Breast epithelium (tissue), 4 donors: ENCODE measurements at regions of chr1 and their contacts with region 1.

Region 1: GRCh38 chr1:78702427-78702826 is 52.8 kb downstream of the IFI44 start:
- DNase-seq: no peak
- H3K4me3 ChIP-seq: no peak overlapping the region
- H3K27ac ChIP-seq: no peak overlapping the region
- H3K4me1 ChIP-seq: no peaks in the 10 kb centered on the region
- H3K27me3 ChIP-seq: no peaks in the 10 kb centered on the region
- CTCF ChIP-seq: no peak
- POLR2A ChIP-seq: no peak

Region 2: DNA sequence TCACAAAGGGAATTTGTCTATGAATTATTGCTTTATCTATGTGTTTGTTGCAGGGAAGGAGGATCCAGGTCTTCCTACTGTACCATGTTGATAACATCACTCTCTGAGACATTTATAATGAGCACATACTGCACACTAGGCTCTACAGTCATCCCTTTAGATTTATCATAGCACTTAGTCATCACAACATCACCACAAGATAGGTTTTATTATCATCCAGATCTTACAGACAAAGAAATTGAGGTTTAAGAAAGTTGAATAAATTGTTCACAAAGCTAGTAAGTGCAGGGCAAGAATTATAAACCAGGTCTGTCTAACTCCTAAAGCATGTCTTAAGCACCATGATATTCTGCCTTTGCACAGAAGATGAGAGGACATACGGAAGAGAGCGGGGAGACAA is 1956.2 kb before region 1 on chr1:
- intact Hi-C with region 1: no loop called
- DNase-seq: no peak
- H3K4me3 ChIP-seq: no peak overlapping the region
- H3K27ac ChIP-seq: no peak overlapping the region
- H3K4me1 ChIP-seq: no peaks in the 10 kb centered on the region
- H3K27me3 ChIP-seq: no peaks in the 10 kb centered on the region
- CTCF ChIP-seq: no peak
- POLR2A ChIP-seq: no peak

Region 3: GRCh38 chr1:78237364-78237916 is 465.0 kb before region 1 on chr1:
- intact Hi-C with region 1: no loop called
- DNase-seq: peak in 1 of 2 donors; percentile 40
- H3K4me3 ChIP-seq: no peak overlapping the region
- H3K27ac ChIP-seq: peak overlapping the region in 1 of 2 donors; percentile 23
- H3K4me1 ChIP-seq: no peaks in the 10 kb centered on the region
- H3K27me3 ChIP-seq: no peaks in the 10 kb centered on the region
- CTCF ChIP-seq: no peak
- POLR2A ChIP-seq: no peak

Region 4: DNA sequence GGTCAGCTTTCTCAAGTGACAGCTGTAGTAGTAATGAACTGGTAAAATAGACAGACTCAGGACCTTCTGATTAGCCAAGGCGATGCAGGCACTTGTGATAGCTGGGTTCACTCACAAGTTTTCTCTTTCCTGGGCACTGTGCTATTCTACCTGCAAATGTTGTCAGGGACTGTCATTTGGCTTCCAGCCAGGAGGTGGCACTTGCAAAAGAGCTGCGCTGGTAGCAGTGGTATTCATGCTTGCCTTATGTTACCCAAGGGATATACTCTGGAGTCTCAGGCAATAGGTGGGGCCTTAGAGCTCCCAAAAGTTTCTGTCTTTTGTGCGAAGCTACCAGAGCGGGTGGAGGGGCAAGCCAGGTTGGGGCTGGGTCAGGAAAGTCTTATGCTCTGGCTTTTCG is 29.3 kb before region 1 on chr1:
- intact Hi-C with region 1: no loop called
- DNase-seq: no peak
- H3K4me3 ChIP-seq: no peak overlapping the region
- H3K27ac ChIP-seq: no peak overlapping the region
- H3K4me1 ChIP-seq: no peaks in the 10 kb centered on the region
- H3K27me3 ChIP-seq: no peaks in the 10 kb centered on the region
- CTCF ChIP-seq: no peak
- POLR2A ChIP-seq: no peak

Region 5: GRCh38 chr1:78722947-78723346 is 20.5 kb after region 1 on chr1:
- intact Hi-C with region 1: loop called (anchors 2 kb)
- DNase-seq: no peak
- H3K4me3 ChIP-seq: no peak overlapping the region
- H3K27ac ChIP-seq: no peak overlapping the region
- H3K4me1 ChIP-seq: no peaks in the 10 kb centered on the region
- H3K27me3 ChIP-seq: no peaks in the 10 kb centered on the region
- CTCF ChIP-seq: no peak
- POLR2A ChIP-seq: no peak

Region 6: DNA sequence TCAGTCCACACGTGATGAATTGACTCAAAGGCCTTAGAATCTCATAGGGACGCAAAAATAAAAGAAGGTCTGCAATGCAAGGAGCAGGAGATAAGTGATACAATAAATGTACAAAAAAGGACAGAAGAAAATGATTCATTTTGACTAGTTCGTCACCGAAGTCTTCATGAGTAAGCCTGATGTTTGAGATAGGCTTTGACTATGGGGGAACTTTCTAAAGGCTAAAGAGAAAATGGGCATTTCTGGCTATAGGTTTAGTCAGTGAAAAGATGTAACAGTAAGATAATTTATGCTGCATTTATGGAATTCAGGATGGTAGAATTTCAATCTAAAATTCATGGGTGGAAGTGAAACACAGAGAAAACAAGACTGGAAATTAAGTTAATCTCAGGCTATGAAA is 141.1 kb after region 1 on chr1:
- intact Hi-C with region 1: no loop called
- DNase-seq: no peak
- H3K4me3 ChIP-seq: no peak overlapping the region
- H3K27ac ChIP-seq: no peak overlapping the region
- H3K4me1 ChIP-seq: no peaks in the 10 kb centered on the region
- H3K27me3 ChIP-seq: no peaks in the 10 kb centered on the region
- CTCF ChIP-seq: no peak
- POLR2A ChIP-seq: no peak